ENCODE measurements at regions of chr16 and their contacts with region 1.

Region 1: GRCh38 chr16:1308977-1309885 is at the start of gene UBE2I:
- DNase-seq: peak; percentile 95 to 100 (median 99)
- ATAC-seq: peak; percentile 85
- H3K4me3 ChIP-seq: peak within 1 kb of the TSS; percentile 95
- H3K4me3 Mint-ChIP-seq: peak within 1 kb of the TSS; percentile 92 to 100 (median 98)
- H3K27ac ChIP-seq: peak within 1 kb of the TSS; percentile 99
- H3K27ac Mint-ChIP-seq: peak within 1 kb of the TSS; percentile 97 to 100 (median 99)
- H3K4me1 ChIP-seq: peaks cover 27 to 33% of the 10 kb centered on the region in 2 donors
- H3K4me1 Mint-ChIP-seq: peaks cover 15 to 56% (median 34%) of the 10 kb centered on the region in 7 donors
- H3K27me3 ChIP-seq: no peaks in the 10 kb centered on the region
- H3K27me3 Mint-ChIP-seq: no peaks in the 10 kb centered on the region
- total RNA-seq, gene UBE2I: 159 to 277 (median 203) TPM

Region 2: GRCh38 chr16:1256874-1257322 is 52.3 kb before region 1 on chr16:
- CTCF ChIA-PET with region 1: no interaction called
- POLR2A ChIA-PET with region 1: no interaction called
- intact Hi-C with region 1: no loop called
- DNase-seq: no peak
- ATAC-seq: no peak
- H3K4me3 ChIP-seq: no peak overlapping the region
- H3K4me3 Mint-ChIP-seq: no peak overlapping the region
- H3K27ac ChIP-seq: no peak overlapping the region
- H3K27ac Mint-ChIP-seq: no peak overlapping the region
- H3K4me1 ChIP-seq: no peaks in the 10 kb centered on the region
- H3K4me1 Mint-ChIP-seq: peaks cover 0 to 9% (median 5%) of the 10 kb centered on the region in 7 donors
- H3K27me3 ChIP-seq: no peaks in the 10 kb centered on the region
- H3K27me3 Mint-ChIP-seq: peaks cover 13 to 23% (median 14%) of the 10 kb centered on the region in 5 donors

Region 3: GRCh38 chr16:1331712-1332617 is 22.7 kb after region 1 on chr16:
- CTCF ChIA-PET with region 1: no interaction called
- POLR2A ChIA-PET with region 1: no interaction called
- intact Hi-C with region 1: loop called in 1 of 2 experiments (anchors 2 kb)
- DNase-seq: peak in 2 of 9 donors; percentile 16 to 49
- ATAC-seq: peak; percentile 61
- H3K4me3 ChIP-seq: peak overlapping the region; percentile 8
- H3K4me3 Mint-ChIP-seq: peak overlapping the region in 8 of 10 donors; percentile 64 to 80 (median 69)
- H3K27ac ChIP-seq: no peak overlapping the region
- H3K27ac Mint-ChIP-seq: peak overlapping the region in 2 of 9 donors; percentile 36 to 77
- H3K4me1 ChIP-seq: peaks cover 14 to 27% of the 10 kb centered on the region in 2 donors
- H3K4me1 Mint-ChIP-seq: peaks cover 0 to 18% (median 12%) of the 10 kb centered on the region in 7 donors
- H3K27me3 ChIP-seq: peaks cover 0 to 16% of the 10 kb centered on the region in 2 donors
- H3K27me3 Mint-ChIP-seq: peaks cover 0 to 36% (median 14%) of the 10 kb centered on the region in 5 donors

Region 4: GRCh38 chr16:1351582-1352362 is 42.5 kb after region 1 on chr16 and contains the starts of genes GNPTG and TSR3:
- CTCF ChIA-PET with region 1: no interaction called
- POLR2A ChIA-PET with region 1: interaction called, 5 read pairs
- intact Hi-C with region 1: loop called (anchors 1 to 2 kb)
- DNase-seq: peak; percentile 77 to 96 (median 86)
- ATAC-seq: peak; percentile 93
- H3K4me3 ChIP-seq: peak within 1 kb of the TSS; percentile 71
- H3K4me3 Mint-ChIP-seq: peak within 1 kb of the TSS; percentile 81 to 90 (median 86)
- H3K27ac ChIP-seq: peak within 1 kb of the TSS; percentile 81
- H3K27ac Mint-ChIP-seq: peak within 1 kb of the TSS; percentile 75 to 96 (median 86)
- H3K4me1 ChIP-seq: peaks cover 13 to 21% of the 10 kb centered on the region in 2 donors
- H3K4me1 Mint-ChIP-seq: peaks cover 28 to 45% (median 34%) of the 10 kb centered on the region in 7 donors
- H3K27me3 ChIP-seq: no peaks in the 10 kb centered on the region
- H3K27me3 Mint-ChIP-seq: peaks cover 0 to 5% (median 0%) of the 10 kb centered on the region in 5 donors
- total RNA-seq, gene GNPTG: 37.9 to 57.7 (median 48.6) TPM
- total RNA-seq, gene TSR3: 21.0 to 50.4 (median 33.3) TPM

Region 5: DNA sequence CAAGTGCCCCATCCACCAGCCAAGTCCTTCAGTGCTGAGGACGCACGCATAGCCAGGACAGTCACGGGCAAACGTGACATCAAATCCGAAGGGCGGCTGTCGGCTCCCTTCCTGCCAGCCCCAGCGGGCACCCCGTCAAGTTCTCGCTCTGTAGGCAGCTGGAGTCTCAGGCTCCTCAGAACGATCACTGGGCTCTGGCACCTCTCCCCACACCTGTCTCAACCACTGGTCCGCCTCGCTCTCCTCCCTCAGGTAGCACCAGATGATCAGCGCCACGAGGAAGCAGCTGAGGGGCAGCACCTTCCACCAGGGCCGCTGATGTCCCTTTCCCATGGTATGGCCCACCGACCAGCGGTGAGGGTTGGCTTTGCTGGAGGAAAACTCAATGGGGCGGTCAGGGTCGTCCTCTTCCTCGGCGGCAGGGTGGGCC is 110.9 kb after region 1 on chr16:
- CTCF ChIA-PET with region 1: no interaction called
- POLR2A ChIA-PET with region 1: no interaction called
- intact Hi-C with region 1: loop called in 1 of 2 experiments (anchors 1 kb)
- DNase-seq: peak in 1 of 9 donors; percentile 30
- ATAC-seq: no peak
- H3K4me3 ChIP-seq: peak overlapping the region; percentile 66
- H3K4me3 Mint-ChIP-seq: peak overlapping the region; percentile 90 to 94 (median 92)
- H3K27ac ChIP-seq: peak overlapping the region; percentile 95
- H3K27ac Mint-ChIP-seq: peak overlapping the region; percentile 25 to 98 (median 98)
- H3K4me1 ChIP-seq: peaks cover 6 to 11% of the 10 kb centered on the region in 2 donors
- H3K4me1 Mint-ChIP-seq: peaks cover 4 to 31% (median 20%) of the 10 kb centered on the region in 7 donors
- H3K27me3 ChIP-seq: no peaks in the 10 kb centered on the region
- H3K27me3 Mint-ChIP-seq: peaks cover 0 to 5% (median 0%) of the 10 kb centered on the region in 5 donors

Region 6: DNA sequence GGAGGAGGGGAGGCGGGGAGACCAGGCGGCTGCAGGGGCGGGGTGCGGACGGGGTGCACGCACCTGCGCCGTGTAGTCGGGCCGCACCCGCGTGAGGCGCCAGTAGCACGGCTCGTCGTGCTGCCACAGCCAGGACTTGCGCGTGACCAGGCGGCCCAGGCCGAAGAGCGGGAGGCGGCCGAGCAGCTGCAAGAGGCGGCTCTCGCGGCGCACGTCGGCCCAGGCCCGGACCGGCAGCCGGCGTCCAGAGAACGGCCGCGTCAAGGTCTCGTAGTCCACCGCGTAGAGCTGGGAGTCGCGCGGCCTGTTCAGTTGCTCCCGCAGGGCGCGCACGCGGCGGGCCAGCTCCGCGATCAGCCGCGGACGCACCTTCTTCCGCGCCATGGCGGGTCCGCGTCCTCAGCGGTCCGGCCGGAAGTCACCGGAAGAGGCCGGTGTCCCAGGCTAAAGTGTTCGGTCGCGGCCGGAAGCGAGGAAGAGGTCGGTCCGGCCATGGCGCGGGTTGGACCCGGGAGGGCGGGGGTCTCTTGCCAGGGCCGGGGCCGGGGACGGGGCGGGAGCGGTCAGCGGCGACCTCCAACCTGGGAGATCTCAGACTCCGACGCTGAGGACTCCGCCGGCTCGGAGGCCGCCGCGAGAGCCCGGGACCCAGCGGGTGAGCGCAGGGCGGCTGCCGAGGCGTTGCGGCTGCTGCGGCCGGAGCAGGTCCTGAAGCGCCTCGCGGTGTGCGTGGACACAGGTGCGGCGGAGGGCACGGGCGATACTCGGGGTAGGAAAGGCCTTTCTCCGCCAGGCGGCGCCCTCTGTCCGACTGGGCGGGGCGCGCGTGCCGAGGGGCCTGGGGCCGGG is 463.7 kb after region 1 on chr16 and contains the starts of genes EME2 and MRPS34:
- CTCF ChIA-PET with region 1: no interaction called
- POLR2A ChIA-PET with region 1: no interaction called
- intact Hi-C with region 1: loop called in 1 of 2 experiments (anchors 2 kb)
- DNase-seq: peak; percentile 61 to 88 (median 73)
- ATAC-seq: peak; percentile 76
- H3K4me3 ChIP-seq: peak within 1 kb of the TSS; percentile 70
- H3K4me3 Mint-ChIP-seq: peak within 1 kb of the TSS; percentile 91 to 99 (median 98)
- H3K27ac ChIP-seq: peak within 1 kb of the TSS; percentile 85
- H3K27ac Mint-ChIP-seq: peak within 1 kb of the TSS; percentile 86 to 98 (median 95)
- H3K4me1 ChIP-seq: peaks cover 13 to 26% of the 10 kb centered on the region in 2 donors
- H3K4me1 Mint-ChIP-seq: peaks cover 8 to 23% (median 12%) of the 10 kb centered on the region in 7 donors
- H3K27me3 ChIP-seq: no peaks in the 10 kb centered on the region
- H3K27me3 Mint-ChIP-seq: peaks cover 0 to 2% (median 0%) of the 10 kb centered on the region in 5 donors
- total RNA-seq, gene EME2: 32.2 to 47.5 (median 36.8) TPM
- total RNA-seq, gene MRPS34: 41.6 to 115 (median 49.5) TPM

Region 7: DNA sequence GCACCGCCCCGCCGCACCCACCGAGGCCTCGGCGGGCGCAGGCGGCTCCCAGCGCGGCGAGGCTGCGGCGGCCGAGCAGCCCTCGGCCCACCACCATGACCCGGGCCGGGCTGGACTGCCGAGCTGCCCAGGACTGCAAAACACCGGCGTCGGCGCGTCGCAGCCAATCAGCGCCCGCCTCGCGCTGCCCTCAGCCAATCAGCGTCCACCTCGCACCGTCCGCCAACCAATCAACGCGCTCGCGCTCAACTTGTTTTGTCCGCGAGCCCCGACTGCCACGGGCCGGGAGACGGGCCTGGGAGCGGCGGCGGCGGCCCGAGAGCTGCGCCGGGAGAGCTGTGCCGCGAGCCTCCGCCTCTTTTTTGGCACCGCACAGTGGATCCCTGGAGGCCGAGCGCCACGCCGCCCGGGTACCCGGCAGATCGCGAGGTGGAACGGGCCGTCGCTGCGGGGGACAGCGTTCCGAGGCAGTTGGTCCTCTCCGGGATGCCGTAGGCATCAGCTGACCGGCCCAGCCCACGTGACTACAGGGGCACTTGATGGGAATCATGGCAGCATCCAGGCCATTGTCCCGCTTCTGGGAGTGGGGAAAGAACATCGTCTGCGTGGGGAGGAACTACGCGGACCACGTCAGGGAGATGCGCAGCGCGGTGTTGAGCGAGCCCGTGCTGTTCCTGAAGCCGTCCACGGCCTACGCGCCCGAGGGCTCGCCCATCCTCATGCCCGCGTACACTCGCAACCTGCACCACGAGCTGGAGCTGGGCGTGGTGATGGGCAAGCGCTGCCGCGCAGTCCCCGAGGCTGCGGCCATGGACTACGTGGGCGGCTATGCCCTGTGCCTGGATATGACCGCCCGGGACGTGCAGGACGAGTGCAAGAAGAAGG is 517.7 kb after region 1 on chr16 and contains the starts of genes FAHD1 and HAGH:
- CTCF ChIA-PET with region 1: no interaction called
- POLR2A ChIA-PET with region 1: no interaction called
- intact Hi-C with region 1: loop called in 1 of 2 experiments (anchors 1 kb)
- DNase-seq: peak; percentile 83 to 98 (median 92)
- ATAC-seq: peak; percentile 91
- H3K4me3 ChIP-seq: peak within 1 kb of the TSS; percentile 99
- H3K4me3 Mint-ChIP-seq: peak within 1 kb of the TSS; percentile 82 to 98 (median 93)
- H3K27ac ChIP-seq: peak within 1 kb of the TSS; percentile 78
- H3K27ac Mint-ChIP-seq: peak within 1 kb of the TSS; percentile 85 to 94 (median 91)
- H3K4me1 ChIP-seq: peaks cover 19 to 26% of the 10 kb centered on the region in 2 donors
- H3K4me1 Mint-ChIP-seq: peaks cover 21 to 62% (median 44%) of the 10 kb centered on the region in 7 donors
- H3K27me3 ChIP-seq: no peaks in the 10 kb centered on the region
- H3K27me3 Mint-ChIP-seq: no peaks in the 10 kb centered on the region
- total RNA-seq, gene FAHD1: 7.8 to 12.9 (median 9.7) TPM
- total RNA-seq, gene HAGH: 46.2 to 72.9 (median 48.9) TPM